ENCODE measurements at regions of chr4 and their contacts with region 1.

Region 1: DNA sequence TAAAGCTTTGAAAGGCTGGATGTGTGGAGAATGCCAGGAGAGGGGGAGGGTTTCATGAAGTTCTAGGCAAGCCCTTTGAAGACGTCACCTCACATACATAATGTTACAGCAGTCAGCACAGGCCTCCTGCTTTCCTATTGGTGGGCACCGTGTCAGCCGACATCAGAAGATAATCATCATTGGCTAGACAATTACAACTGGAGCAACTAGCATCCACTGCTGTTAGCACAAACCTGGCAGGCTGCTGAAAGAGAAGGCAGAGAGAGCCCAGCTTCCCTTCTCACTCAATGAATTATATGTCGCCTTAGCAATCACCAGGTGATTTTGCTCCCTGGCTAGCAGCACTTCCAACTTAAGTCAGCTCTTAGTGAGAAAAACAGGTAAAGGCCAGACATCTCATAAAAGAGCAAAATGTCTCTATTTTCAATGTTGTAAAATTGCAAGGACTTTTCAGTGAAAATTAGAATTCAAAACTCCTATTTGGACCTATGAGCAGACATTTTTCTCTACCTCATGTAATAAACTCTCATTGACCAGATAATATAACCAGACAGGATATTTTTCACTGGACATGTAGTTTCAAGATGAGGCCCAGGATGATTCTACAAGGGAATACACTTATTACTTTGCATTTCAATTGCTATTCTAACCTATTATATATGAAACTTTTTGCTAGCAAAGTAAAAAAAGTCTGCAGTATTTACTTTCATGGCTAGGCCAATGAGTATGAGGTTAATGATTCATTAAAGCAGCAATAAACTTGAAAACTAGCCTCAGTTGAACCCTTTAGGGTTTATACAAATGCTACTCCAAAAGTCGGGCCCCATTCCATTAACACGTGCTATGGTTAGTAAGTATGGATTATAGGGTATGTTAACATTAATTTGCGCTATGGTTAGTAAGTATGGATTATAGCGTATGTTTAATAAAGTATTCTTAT is 4.3 kb downstream of the ELOVL6 start:
- DNase-seq: peak; percentile 80
- H3K4me3 Mint-ChIP-seq: peak overlapping the region; percentile 61
- H3K27ac Mint-ChIP-seq: peak overlapping the region; percentile 87
- H3K4me1 Mint-ChIP-seq: peaks cover 26% of the 10 kb centered on the region
- H3K27me3 Mint-ChIP-seq: no peaks in the 10 kb centered on the region

Region 2: GRCh38 chr4:109559983-109560686 is 634.0 kb before region 1 on chr4 and contains the start of gene MCUB:
- intact Hi-C with region 1: loop called (anchors 10 kb)
- DNase-seq: peak; percentile 93
- H3K4me3 Mint-ChIP-seq: peak within 1 kb of the TSS; percentile 84
- H3K27ac Mint-ChIP-seq: peak within 1 kb of the TSS; percentile 93
- H3K4me1 Mint-ChIP-seq: peaks cover 33% of the 10 kb centered on the region
- H3K27me3 Mint-ChIP-seq: no peaks in the 10 kb centered on the region
- total RNA-seq, gene MCUB: 30.1 and 37.1 TPM in 2 replicates

Region 3: GRCh38 chr4:110049951-110050925 is 143.9 kb before region 1 on chr4:
- intact Hi-C with region 1: loop called (anchors 2 kb)
- DNase-seq: peak; percentile 27
- H3K4me3 Mint-ChIP-seq: no peak overlapping the region
- H3K27ac Mint-ChIP-seq: no peak overlapping the region
- H3K4me1 Mint-ChIP-seq: peaks cover 11% of the 10 kb centered on the region
- H3K27me3 Mint-ChIP-seq: no peaks in the 10 kb centered on the region

Region 4: GRCh38 chr4:110087070-110087708 is 106.9 kb before region 1 on chr4:
- intact Hi-C with region 1: loop called (anchors 2 kb)
- DNase-seq: no peak
- H3K4me3 Mint-ChIP-seq: no peak overlapping the region
- H3K27ac Mint-ChIP-seq: peak overlapping the region; percentile 58
- H3K4me1 Mint-ChIP-seq: peaks cover 57% of the 10 kb centered on the region
- H3K27me3 Mint-ChIP-seq: no peaks in the 10 kb centered on the region

Region 5: DNA sequence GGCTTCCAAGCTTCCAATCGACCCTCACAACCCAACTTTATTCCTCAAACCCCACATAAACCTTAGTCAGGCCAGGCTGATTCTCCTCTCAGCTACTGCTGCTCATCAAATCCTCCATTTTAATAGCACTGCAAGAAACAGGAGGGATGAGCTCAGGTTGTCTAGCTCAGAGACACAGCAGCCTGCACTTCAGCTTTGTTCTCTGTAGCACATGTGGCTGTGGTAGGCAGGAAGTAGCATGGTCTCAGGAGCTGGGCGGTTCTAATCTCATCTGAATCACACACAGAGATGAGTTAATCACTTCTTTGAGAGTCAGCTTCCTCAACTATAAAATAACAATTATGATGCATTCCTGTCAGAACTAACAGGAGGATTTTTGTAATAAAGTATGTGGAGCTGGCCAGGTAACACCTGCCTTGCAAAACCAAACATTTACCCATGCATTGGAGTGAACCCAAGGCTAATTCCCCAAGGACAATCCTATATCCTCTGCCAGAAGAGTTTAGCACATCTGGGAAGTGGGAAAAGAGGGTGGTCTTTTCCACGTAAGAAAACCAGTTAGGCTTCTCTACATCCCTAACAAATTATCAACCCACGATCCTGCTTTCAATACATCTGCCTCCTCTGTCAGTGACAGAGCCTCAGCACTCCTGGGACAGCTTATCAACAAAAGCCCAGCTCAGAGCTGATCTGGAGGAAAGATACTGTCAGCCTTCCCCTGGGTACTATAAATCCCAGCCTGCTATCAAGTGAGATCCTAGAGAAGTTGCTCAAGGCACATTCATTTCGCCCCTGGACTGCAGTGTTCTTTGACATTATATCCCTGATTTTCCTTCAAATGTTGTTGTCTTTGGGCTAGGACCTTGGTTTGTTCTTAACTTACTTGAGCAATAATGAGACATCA is 28.5 kb before region 1 on chr4:
- intact Hi-C with region 1: loop called (anchors 1 kb)
- DNase-seq: peak; percentile 61
- H3K4me3 Mint-ChIP-seq: peak overlapping the region; percentile 72
- H3K27ac Mint-ChIP-seq: peak overlapping the region; percentile 100
- H3K4me1 Mint-ChIP-seq: peaks cover 35% of the 10 kb centered on the region
- H3K27me3 Mint-ChIP-seq: no peaks in the 10 kb centered on the region

Region 6: DNA sequence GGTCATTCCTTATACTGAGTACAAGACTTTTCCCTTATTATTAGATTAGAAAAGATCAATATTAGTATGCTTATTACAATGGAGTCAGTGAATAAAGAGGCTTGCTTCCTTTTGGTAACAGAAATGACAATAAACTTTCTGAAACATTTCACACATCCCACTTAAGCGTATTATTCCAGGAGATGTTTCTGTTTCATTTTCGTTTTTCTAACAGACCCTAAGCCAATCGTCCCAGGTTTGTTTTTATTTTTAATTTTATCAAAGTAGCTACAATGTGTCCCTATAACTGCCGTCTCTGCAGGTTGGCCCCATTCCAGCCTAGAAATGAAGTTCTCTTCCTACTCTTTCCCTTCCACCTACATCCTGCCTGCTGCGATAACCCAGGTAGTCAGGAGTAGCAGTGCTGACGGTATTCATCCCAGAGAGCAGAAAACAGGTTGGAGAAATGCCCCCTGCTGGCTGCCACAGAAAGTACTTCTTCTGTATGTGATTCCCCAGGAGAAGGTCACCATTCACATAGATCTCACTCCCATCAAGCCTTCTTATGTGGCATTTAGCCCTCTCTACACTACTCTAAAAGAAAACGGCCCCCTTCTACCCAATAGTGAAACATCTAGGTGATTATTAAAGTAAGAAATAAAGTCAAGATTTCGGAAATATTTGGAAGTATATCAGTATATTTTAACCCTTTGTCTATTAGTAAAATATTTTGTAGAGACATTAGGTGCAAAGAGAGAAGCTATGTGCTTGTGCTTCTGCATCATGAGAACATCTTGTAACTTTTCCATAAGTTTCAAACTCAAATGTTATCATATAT is 322.2 kb after region 1 on chr4:
- intact Hi-C with region 1: loop called (anchors 5 kb)
- DNase-seq: peak; percentile 55
- H3K4me3 Mint-ChIP-seq: peak overlapping the region; percentile 94
- H3K27ac Mint-ChIP-seq: peak overlapping the region; percentile 46
- H3K4me1 Mint-ChIP-seq: peaks cover 14% of the 10 kb centered on the region
- H3K27me3 Mint-ChIP-seq: peaks cover 2% of the 10 kb centered on the region